Ascending aorta (tissue), 2 donors: ENCODE measurements at regions of chr22 and their contacts with region 1.

Region 1: DNA sequence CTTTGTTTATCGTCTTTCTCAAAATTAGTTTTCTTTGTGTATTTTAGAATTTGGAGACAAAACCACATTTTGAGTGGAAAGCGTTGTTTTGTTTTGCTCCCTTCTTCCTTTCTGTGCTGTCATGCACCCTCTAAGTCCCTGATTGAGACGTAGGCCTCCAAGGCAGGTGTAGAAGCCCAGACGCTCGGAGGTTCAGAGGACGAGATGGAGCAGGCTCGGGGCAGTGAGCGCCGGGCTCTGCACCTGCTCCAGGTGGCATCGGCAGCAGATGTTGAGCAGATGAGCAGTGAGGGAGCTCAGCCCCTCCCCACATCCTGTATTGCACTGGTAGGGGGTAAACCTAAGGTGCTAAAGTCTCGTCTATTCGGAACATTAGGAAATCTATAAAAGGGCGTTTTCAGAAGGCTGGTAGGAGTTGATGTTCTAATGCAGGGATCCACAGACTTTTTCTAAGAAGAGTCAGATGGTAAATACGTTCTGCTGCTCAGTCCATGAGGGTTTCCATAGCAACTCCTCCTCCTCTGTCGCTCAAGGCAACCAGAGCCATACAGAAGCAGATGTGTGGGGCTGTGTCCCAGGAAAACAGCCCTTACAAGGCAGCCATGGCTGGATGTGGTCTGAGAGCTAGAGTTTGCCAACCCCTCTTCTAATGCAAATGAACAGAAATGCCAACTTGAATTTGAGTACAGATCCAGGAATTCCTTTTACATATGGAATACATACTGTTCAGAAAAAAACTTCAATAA is 724.2 kb downstream of the BRD1 start:
- DNase-seq: no peak
- H3K4me3 ChIP-seq: no peak overlapping the region
- H3K27ac ChIP-seq: no peak overlapping the region
- H3K4me1 ChIP-seq: peaks cover 7 to 17% of the 10 kb centered on the region in 2 donors
- H3K27me3 ChIP-seq: no peaks in the 10 kb centered on the region
- CTCF ChIP-seq: no peak

Region 2: DNA sequence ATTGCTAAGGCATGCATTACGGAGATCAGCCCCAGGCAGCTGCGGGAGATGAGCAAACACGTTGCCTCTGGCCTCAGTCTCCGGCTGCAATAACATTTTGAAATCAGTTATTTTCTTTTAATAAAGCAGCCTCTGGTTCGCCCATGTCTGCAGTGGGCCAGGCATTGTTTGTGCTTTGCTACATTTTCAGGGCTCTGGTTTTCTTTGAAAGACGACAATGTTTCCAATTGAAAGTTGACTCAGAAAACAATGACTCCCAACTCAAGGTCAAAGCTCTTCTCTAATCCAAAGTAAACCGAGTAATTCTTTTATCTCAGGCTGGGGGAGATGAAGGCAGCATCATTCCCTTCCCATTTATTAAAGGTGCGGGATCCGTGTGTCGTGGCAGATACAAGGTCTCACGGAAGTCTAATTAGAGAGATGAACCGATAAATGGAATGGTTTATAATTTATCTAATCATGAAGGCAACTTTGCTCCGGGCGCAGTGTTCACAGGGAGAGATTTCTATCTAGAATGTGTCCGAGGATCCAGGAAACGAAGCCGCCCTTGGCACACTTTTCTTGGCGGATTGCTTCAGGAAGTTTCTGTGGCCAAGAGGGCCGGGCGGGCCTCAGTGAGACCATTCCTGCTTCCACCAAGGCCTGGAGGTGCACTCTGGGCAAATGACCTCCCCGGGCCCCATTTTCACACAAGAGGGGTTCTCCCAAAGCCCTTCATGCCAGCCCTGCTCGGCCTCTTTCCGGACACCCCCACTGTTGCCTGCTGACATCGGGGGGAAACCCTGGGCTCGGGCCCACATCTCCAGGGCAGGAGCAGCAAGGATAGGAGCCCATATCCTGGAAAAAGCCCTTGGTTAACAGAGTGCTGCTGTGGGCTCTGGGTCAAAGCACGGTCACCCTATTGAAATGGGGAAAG is 87.2 kb before region 1 on chr22:
- intact Hi-C with region 1: loop called (anchors 5 kb)
- DNase-seq: peak in 1 of 2 donors; percentile 65
- H3K4me3 ChIP-seq: no peak overlapping the region
- H3K27ac ChIP-seq: peak overlapping the region; percentile 84 to 86
- H3K4me1 ChIP-seq: peaks cover 28 to 44% of the 10 kb centered on the region in 2 donors
- H3K27me3 ChIP-seq: no peaks in the 10 kb centered on the region
- CTCF ChIP-seq: no peak